AG04449 (cell line): ENCODE measurements at regions of chr9 and their contacts with region 1.

Region 1: DNA sequence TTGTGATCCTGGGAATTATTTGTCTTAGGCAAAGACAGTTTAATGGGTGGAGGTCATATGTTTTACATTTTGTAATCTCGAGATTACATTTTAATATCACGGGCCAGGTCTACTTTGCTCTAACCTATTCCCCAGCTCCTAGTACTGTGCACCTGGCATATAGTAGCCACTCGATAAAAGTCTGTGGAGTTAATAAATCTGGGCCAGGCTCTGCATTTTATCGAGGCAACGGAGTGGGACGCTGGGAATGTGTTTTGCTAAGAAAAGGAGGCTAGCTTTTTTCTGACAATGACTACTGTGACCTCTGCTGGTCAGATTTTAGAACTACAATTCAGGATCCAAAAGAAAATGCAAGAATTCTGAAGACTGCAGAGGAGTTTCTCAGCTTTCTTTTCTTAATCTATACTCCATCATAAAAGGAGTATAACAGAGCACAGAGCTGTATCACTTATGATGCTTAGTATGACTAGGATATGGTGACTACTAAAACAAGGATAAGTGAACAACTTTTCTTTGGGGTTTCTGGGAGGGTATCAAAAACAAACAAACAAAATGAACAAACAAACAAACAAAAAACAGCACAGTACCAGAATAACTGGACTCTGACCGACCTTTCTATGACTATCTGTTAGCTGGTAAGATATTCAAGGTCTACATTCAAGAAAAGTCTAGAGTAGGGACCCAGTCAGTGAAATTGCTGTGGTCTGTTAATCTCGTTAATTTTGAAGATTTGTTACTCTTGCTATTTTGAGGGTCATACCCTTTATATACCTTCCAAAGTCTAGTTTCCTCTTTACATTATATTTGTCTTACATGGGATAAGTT is 46.1 kb upstream of the CER1 start:
- DNase-seq: no peak
- H3K4me3 ChIP-seq: no peak overlapping the region
- CTCF ChIP-seq: peak; percentile 47

Region 2: DNA sequence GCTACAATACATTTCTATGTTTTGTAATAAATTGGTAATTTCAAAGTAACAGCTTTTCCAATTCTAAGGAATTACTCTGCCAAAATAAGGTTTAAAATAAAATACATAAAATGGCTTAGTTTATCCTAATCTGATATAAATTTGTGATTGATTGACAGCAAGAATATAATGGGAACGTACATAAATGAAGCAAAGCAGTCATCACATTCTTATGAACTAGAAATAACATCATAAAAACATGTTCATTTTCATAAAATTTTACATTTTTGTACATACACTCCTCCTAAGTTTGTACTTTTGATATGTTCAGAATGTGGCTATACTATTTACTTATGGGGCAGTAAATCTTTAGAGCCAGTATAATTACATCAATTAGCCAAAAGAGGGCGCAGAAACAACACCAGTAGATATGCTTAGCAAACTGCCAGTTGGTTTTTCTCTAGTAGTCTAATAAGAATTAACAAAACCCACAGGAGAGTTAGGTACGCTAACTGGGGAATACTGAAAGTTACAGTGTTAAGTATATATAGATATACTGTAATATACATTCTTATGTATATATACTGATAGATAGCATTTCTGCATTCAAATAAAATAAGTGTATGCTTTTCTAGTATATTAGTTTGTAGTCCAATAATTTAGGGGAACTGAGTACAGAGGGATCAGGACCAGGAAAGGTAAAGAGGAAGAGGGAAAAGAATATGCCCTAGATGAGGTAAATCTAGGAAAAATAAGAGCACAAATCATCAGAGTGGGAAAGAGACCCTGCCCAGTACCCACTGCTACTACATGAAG is 152.2 kb before region 1 on chr9:
- CTCF ChIA-PET with region 1: interaction called, 51 read pairs
- POLR2A ChIA-PET with region 1: no interaction called
- DNase-seq: peak; percentile 23
- H3K4me3 ChIP-seq: no peak overlapping the region
- CTCF ChIP-seq: peak; percentile 51

Region 3: DNA sequence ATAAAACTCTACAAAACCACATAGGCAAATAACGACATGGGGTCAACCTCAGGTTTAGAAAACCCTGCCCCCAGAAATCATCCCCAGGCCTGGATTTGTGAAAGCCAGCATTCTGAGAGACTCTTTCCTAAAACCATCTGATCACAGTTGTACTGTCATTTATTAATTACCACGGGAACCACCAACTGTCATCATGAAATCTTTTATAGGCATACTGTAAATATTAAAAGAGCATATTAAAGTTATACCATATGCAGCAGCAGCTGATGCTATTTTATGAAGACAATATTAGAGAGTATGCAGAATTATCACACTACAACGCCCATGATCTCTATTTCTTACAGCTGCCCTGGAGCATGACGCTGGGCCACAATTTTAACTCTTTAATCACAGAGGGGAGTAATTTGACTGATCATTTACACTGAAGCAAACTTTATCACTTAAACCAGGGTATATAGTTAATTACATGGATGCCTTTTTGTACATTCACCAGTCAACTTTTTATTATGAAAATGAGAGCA is 66.4 kb before region 1 on chr9:
- CTCF ChIA-PET with region 1: no interaction called
- POLR2A ChIA-PET with region 1: no interaction called
- DNase-seq: no peak
- H3K4me3 ChIP-seq: no peak overlapping the region
- CTCF ChIP-seq: no peak

Region 4: DNA sequence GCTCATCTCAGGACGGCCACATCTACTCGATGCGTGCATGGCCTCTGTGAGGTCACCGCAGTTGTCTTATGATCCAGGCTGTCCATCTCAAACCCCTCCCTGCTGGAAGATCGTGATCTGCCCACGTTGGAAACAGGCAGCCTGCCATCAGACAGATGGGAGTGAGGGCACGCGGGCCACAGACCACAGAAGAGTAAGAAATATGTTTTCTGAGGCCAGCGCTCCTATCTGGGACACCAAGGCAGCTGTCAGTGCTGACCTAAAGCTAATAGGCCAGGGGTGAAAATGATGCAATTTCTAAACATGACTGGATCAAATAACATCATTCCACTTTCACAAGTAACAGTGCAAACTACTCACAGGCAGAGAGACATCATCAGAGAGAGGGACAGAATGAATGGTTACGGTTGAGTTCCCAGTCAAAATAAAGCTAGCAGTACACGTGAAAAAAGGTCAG is 11.0 kb after region 1 on chr9:
- CTCF ChIA-PET with region 1: interaction called, 24 read pairs
- POLR2A ChIA-PET with region 1: no interaction called
- DNase-seq: no peak
- H3K4me3 ChIP-seq: no peak overlapping the region
- CTCF ChIP-seq: no peak

Region 5: DNA sequence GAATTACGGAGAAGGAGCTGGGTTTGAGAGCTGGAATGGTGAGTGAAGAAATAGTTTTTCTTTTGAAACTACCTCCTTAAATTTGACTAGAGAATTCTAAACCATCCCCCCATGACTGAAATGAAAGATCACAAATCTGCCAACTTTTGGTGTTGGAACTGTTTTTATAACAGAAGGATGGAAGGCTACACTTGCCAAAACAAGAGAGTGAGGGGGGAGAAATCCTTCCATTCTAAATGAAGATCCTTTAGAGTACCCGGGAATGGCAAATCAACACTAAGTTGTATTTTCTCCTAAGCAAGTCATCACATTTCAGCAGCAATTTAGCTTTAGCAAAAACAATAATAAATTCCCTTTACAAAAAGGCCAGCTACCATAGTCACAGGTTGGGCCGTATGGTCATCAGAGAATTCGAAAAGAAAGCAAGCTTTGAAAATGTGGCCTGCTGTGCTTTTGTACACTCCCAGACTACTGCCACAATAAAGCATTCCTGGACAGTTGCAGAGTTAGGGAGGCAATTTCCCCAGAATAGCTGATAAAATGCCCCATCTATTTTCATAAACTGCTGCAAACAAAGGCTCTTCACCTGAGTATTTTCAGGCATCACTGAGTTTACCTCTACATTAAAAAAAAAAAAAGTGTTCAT is 166.6 kb after region 1 on chr9:
- CTCF ChIA-PET with region 1: no interaction called
- POLR2A ChIA-PET with region 1: no interaction called
- DNase-seq: no peak
- H3K4me3 ChIP-seq: no peak overlapping the region
- CTCF ChIP-seq: no peak